ENCODE measurements at regions of chr2 and their contacts with region 1.

Region 1: GRCh38 chr2:236787885-236788284 is 218.3 kb downstream of the ACKR3 start:
- H3K4me3 Mint-ChIP-seq: no peak overlapping the region
- H3K27ac Mint-ChIP-seq: peak overlapping the region; percentile 78
- H3K4me1 Mint-ChIP-seq: peaks cover 30% of the 10 kb centered on the region
- H3K27me3 Mint-ChIP-seq: peaks cover 42% of the 10 kb centered on the region

Region 2: GRCh38 chr2:236711440-236711839 is 76.4 kb before region 1 on chr2:
- intact Hi-C with region 1: loop called (anchors 5 kb)
- H3K4me3 Mint-ChIP-seq: no peak overlapping the region
- H3K27ac Mint-ChIP-seq: peak overlapping the region; percentile 73
- H3K4me1 Mint-ChIP-seq: peaks cover 69% of the 10 kb centered on the region
- H3K27me3 Mint-ChIP-seq: peaks cover 14% of the 10 kb centered on the region

Region 3: DNA sequence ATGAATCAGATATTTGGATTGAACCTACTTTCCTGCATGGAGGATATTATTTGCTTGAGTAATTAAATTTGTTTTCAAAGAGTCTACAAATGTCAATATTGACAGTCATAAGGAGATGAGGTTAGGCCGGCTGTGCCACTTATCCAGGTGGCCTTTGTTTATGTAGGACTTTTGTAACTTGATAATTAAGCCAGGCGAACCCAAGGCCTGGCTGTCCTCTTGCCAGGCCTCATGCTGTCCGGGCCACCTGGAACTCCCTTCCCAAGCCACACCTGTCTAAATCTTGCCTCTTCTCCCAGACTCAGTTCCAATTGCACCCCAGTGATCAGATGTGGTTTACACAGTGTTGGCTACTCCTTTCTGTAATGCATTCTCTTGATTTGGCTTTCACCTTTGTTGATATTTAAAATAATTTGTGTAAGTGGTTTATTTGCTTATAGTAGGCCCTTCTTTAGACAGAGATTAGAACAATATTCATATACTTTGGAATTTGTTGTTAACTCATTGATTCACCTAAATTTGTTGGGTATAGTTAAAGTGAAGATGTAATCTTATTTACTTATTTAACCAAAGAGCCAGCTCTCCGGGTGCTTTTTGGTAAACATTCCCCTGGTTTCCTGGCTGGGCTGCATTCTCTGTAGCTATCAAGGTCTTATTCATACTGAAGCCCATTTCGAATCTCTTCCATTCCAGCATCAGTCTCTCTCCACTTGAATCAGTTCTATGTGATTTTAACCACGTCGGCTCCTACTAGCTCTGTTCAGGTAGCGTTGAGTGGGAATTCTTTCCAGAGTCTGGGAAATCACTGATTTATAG is 37.2 kb after region 1 on chr2:
- intact Hi-C with region 1: no loop called
- H3K4me3 Mint-ChIP-seq: no peak overlapping the region
- H3K27ac Mint-ChIP-seq: no peak overlapping the region
- H3K4me1 Mint-ChIP-seq: no peaks in the 10 kb centered on the region
- H3K27me3 Mint-ChIP-seq: peaks cover 39% of the 10 kb centered on the region

Region 4: GRCh38 chr2:236871500-236872001 is 83.7 kb after region 1 on chr2:
- intact Hi-C with region 1: loop called (anchors 1 kb)
- H3K4me3 Mint-ChIP-seq: no peak overlapping the region
- H3K27ac Mint-ChIP-seq: peak overlapping the region; percentile 86
- H3K4me1 Mint-ChIP-seq: peaks cover 62% of the 10 kb centered on the region
- H3K27me3 Mint-ChIP-seq: peaks cover 16% of the 10 kb centered on the region

Region 5: GRCh38 chr2:236928380-236929037 is 140.6 kb after region 1 on chr2:
- intact Hi-C with region 1: no loop called
- H3K4me3 Mint-ChIP-seq: no peak overlapping the region
- H3K27ac Mint-ChIP-seq: no peak overlapping the region
- H3K4me1 Mint-ChIP-seq: no peaks in the 10 kb centered on the region
- H3K27me3 Mint-ChIP-seq: peaks cover 48% of the 10 kb centered on the region